Lower leg skin (tissue), 4 donors: ENCODE measurements at regions of chr5 and their contacts with region 1.

Region 1: GRCh38 chr5:178940569-178941360 is at the start of gene ZNF454:
- DNase-seq: peak; percentile 80 to 96
- H3K4me3 ChIP-seq: peak within 1 kb of the TSS; percentile 37
- CTCF ChIP-seq: no peak
- POLR2A ChIP-seq: no peak
- total RNA-seq, gene ZNF454: 0.08 to 4.2 (median 0.51) TPM

Region 2: DNA sequence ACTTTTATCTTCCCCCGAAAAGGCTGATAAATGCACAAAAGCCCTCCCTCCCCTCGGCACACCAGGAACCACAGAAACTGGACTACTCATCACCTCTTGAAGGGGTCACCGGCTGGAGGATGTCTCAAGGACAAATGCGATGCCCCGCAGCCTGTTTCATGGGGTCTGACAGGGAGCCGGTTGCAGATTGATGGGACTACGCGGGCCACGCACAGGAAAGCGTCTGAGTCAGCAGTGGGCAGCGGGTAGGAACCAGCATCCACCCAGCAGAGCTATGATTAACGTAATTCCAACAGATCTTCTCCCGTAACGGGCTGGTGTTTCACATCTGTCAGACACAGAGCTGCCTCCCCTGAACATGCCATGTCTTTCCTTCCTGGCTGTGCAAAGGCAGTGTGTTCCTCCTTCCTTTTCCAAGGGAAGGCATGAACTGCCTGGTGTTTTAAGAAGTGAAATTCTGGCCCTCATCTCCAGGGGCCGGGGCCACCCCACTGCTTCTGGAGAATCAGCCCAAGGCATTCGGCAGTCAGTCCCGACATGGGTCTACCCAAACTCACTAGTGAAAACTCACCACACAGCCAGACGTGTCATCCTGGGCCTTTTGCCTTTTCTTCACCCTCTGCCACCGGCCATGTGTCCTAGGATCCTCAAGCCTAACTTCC is 563.7 kb before region 1 on chr5:
- intact Hi-C with region 1: loop called (anchors 5 kb)
- DNase-seq: no peak
- H3K4me3 ChIP-seq: no peak overlapping the region
- CTCF ChIP-seq: no peak
- POLR2A ChIP-seq: no peak

Region 3: GRCh38 chr5:178612299-178612698 is 328.5 kb before region 1 on chr5:
- intact Hi-C with region 1: no loop called
- DNase-seq: no peak
- H3K4me3 ChIP-seq: no peak overlapping the region
- CTCF ChIP-seq: no peak
- POLR2A ChIP-seq: no peak

Region 4: GRCh38 chr5:179516221-179516620 is 575.5 kb after region 1 on chr5:
- intact Hi-C with region 1: no loop called
- DNase-seq: no peak
- H3K4me3 ChIP-seq: no peak overlapping the region
- CTCF ChIP-seq: no peak
- POLR2A ChIP-seq: no peak